Esophagus muscularis mucosa (tissue), 4 donors: ENCODE measurements at regions of chr11 and their contacts with region 1.

Region 1: GRCh38 chr11:9972989-9973388 is 309.1 kb downstream of the SWAP70 start:
- DNase-seq: no peak
- H3K4me3 ChIP-seq: no peak overlapping the region
- H3K27ac ChIP-seq: no peak overlapping the region
- H3K4me1 ChIP-seq: peaks cover 0 to 16% (median 9%) of the 10 kb centered on the region in 4 donors
- H3K27me3 ChIP-seq: no peaks in the 10 kb centered on the region
- CTCF ChIP-seq: peak; percentile 63 to 75 (median 67)
- EP300 ChIP-seq: no peak
- POLR2A ChIP-seq: no peak

Region 2: GRCh38 chr11:9626496-9627394 is 346.2 kb before region 1 on chr11:
- intact Hi-C with region 1: no loop called
- DNase-seq: no peak
- H3K4me3 ChIP-seq: no peak overlapping the region
- H3K27ac ChIP-seq: peak overlapping the region in 2 of 4 donors; percentile 6 to 53
- H3K4me1 ChIP-seq: peaks cover 0 to 4% (median 0%) of the 10 kb centered on the region in 4 donors
- H3K27me3 ChIP-seq: no peaks in the 10 kb centered on the region
- CTCF ChIP-seq: no peak
- EP300 ChIP-seq: no peak
- POLR2A ChIP-seq: no peak

Region 3: DNA sequence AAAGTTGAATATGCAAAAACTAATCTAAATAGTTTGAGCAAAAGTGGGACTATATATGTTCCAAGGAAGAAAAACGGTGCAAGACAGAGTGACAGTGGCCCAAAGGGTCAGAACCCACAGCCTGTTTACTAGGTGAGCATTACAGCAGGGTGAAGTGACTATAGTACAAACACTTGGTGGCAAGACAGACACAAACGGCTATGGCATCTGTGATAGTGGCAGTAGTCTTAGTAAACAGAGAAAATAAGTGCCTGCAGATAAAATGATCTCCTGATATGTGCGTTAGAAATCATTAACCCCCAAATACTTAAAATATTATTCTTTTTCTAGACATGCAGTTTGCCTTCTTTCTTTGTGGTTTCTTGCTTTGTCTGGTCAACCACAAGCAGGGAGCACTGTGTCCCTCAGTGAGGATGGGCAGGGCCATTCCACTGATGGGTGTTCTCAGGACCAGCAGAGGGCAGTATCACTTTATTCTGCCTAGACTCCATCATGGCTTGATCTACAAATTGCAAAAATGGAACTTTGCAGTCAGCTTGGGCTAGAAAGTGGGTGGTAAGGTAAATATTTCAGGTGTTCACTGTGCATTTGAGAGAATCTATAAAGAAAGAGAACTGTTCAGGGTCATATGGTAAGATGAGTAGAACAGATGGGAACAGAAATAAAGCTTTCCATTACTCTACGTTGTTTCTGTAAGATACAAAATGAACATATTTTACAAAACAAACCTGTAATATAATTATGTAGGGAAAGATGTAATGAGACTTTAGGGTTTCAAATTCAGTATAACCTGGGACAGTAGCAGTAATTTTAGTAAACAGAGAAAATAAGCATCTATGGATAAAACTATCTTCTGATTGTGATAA is 110.9 kb before region 1 on chr11:
- intact Hi-C with region 1: loop called (anchors 5 kb)
- DNase-seq: no peak
- H3K4me3 ChIP-seq: no peak overlapping the region
- H3K27ac ChIP-seq: no peak overlapping the region
- H3K4me1 ChIP-seq: peaks cover 4 to 19% (median 8%) of the 10 kb centered on the region in 4 donors
- H3K27me3 ChIP-seq: no peaks in the 10 kb centered on the region
- CTCF ChIP-seq: peak; percentile 63 to 83 (median 67)
- EP300 ChIP-seq: no peak
- POLR2A ChIP-seq: no peak

Region 4: DNA sequence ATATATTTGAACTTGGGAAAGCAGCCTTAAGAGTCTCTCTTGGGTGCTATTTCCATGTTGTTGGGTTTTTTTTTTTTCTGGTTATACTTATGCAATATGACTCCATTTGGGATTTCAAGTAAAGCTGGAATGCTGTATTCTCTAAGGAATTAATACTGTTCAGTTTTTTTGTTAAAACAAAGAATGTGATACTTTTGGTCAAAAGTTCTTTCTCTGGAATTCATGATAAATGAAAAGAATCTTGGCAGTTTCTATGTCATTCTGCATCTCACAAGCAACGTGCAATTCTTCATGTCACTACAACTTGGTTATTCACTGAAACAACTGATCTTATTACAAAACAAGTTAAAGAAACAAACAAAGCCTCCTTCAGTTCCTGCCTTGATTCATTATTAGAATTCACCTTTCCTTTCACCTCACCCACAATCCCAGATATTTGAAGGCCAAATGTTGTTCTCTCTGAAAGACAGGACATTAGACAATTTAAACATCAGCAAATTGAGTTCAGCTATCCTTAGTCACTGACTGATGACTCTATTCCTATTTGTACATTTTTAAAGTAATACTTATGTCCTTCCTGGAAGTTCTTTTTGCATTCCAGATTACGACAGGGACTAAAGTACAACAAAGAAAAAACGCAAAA is 144.8 kb after region 1 on chr11:
- intact Hi-C with region 1: no loop called
- DNase-seq: no peak
- H3K4me3 ChIP-seq: no peak overlapping the region
- H3K27ac ChIP-seq: peak overlapping the region; percentile 17 to 39 (median 28)
- H3K4me1 ChIP-seq: peaks cover 28 to 50% (median 42%) of the 10 kb centered on the region in 4 donors
- H3K27me3 ChIP-seq: no peaks in the 10 kb centered on the region
- CTCF ChIP-seq: no peak
- EP300 ChIP-seq: no peak
- POLR2A ChIP-seq: no peak